ENCODE measurements at regions of chr7 and their contacts with region 1.

Region 1: GRCh38 chr7:116258734-116259133 is 48.4 kb downstream of the TES start:
- DNase-seq: no peak
- H3K4me3 ChIP-seq: no peak overlapping the region
- CTCF ChIP-seq: peak in 1 of 3 donors; percentile 57
- POLR2A ChIP-seq: no peak

Region 2: GRCh38 chr7:116499168-116500077 is 240.7 kb after region 1 on chr7 and contains the start of gene CAV2:
- intact Hi-C with region 1: loop called (anchors 5 kb)
- DNase-seq: peak; percentile 48 to 91
- H3K4me3 ChIP-seq: peak within 1 kb of the TSS; percentile 82
- CTCF ChIP-seq: no peak
- POLR2A ChIP-seq: peak in 1 of 2 donors; percentile 13
- total RNA-seq, gene CAV2: 47.3 to 72.1 (median 67.7) TPM

Region 3: GRCh38 chr7:116525913-116526861 is 267.5 kb after region 1 on chr7:
- intact Hi-C with region 1: loop called (anchors 10 kb)
- DNase-seq: peak; percentile 79 to 95
- H3K4me3 ChIP-seq: peak overlapping the region; percentile 96
- CTCF ChIP-seq: no peak
- POLR2A ChIP-seq: no peak

Region 4: GRCh38 chr7:116585967-116586366 is 327.2 kb after region 1 on chr7:
- intact Hi-C with region 1: loop called (anchors 2 kb)
- DNase-seq: no peak
- H3K4me3 ChIP-seq: no peak overlapping the region
- CTCF ChIP-seq: no peak
- POLR2A ChIP-seq: no peak

Region 5: GRCh38 chr7:116809636-116810266 is 551.0 kb after region 1 on chr7:
- intact Hi-C with region 1: loop called (anchors 10 kb)
- DNase-seq: no peak
- H3K4me3 ChIP-seq: no peak overlapping the region
- CTCF ChIP-seq: peak in 1 of 3 donors; percentile 64
- POLR2A ChIP-seq: no peak